ENCODE measurements at regions of chr14 and their contacts with region 1.

Region 1: DNA sequence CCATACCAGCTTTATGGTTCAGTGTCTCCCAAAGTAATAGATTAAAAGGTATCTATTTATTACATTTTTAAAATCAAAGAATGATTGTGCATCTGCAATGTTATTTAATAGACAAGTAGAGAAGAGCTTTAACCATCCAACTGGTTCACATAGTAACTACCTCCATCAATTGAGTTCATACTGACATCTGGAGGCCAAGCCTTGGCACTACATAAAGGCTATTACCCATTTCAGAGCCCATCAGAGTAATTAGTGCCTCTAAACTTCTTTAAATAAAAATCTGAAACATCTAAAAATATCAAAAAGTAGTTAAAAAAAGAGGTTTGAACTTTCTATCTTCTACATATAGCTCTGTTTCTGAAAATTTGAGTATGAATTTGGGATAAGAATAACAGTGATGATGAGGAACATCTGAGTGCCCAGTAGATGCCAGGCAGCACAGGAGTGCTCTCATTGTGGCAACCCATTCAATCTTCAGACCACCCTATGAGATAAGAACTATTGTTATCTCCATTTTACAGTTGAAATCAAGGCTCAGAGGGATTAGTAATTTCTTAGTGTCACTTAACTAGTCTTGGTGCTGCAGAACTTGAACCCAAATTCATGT is 132.9 kb upstream of the DAAM1 start:
- DNase-seq: peak in 1 of 4 donors; percentile 57
- ATAC-seq: peak; percentile 93
- H3K4me3 ChIP-seq: no peak overlapping the region
- H3K27ac ChIP-seq: no peak overlapping the region
- H3K4me1 ChIP-seq: no peaks in the 10 kb centered on the region
- H3K27me3 ChIP-seq: no peaks in the 10 kb centered on the region
- CTCF ChIP-seq: peak; percentile 64 to 72

Region 2: GRCh38 chr14:58501214-58501816 is 554.2 kb before region 1 on chr14:
- intact Hi-C with region 1: loop called in 1 of 2 experiments (anchors 10 kb)
- DNase-seq: peak in 2 of 4 donors; percentile 46 to 71
- ATAC-seq: peak; percentile 93
- H3K4me3 ChIP-seq: no peak overlapping the region
- H3K27ac ChIP-seq: no peak overlapping the region
- H3K4me1 ChIP-seq: no peaks in the 10 kb centered on the region
- H3K27me3 ChIP-seq: no peaks in the 10 kb centered on the region
- CTCF ChIP-seq: peak; percentile 64 to 69